CD4-positive, alpha-beta T cell (primary cell): ENCODE measurements at regions of chr11 and their contacts with region 1.

Region 1: GRCh38 chr11:129895126-129896041 is at the start of gene NFRKB:
- DNase-seq: peak; percentile 81 to 92 (median 88)
- ATAC-seq: peak; percentile 96
- H3K4me3 ChIP-seq: peak within 1 kb of the TSS; percentile 91
- H3K4me3 Mint-ChIP-seq: peak within 1 kb of the TSS; percentile 92
- H3K27ac ChIP-seq: peak within 1 kb of the TSS; percentile 43 to 74
- H3K27ac Mint-ChIP-seq: peak within 1 kb of the TSS; percentile 92
- H3K4me1 ChIP-seq: peaks cover 20% of the 10 kb centered on the region
- H3K4me1 Mint-ChIP-seq: peaks cover 54% of the 10 kb centered on the region
- H3K27me3 ChIP-seq: no peaks in the 10 kb centered on the region
- H3K27me3 Mint-ChIP-seq: no peaks in the 10 kb centered on the region
- CTCF ChIP-seq: no peak
- total RNA-seq, gene NFRKB: 61.7 to 64.5 TPM

Region 2: GRCh38 chr11:129785383-129786111 is 109.8 kb before region 1 on chr11:
- CTCF ChIA-PET with region 1: no interaction called
- POLR2A ChIA-PET with region 1: no interaction called
- intact Hi-C with region 1: loop called (anchors 5 to 10 kb)
- DNase-seq: peak in 3 of 14 experiments; percentile 7 to 43 (median 29)
- ATAC-seq: no peak
- H3K4me3 ChIP-seq: no peak overlapping the region
- H3K4me3 Mint-ChIP-seq: no peak overlapping the region
- H3K27ac ChIP-seq: no peak overlapping the region
- H3K27ac Mint-ChIP-seq: no peak overlapping the region
- H3K4me1 ChIP-seq: peaks cover 4% of the 10 kb centered on the region
- H3K4me1 Mint-ChIP-seq: peaks cover 8% of the 10 kb centered on the region
- H3K27me3 ChIP-seq: no peaks in the 10 kb centered on the region
- H3K27me3 Mint-ChIP-seq: no peaks in the 10 kb centered on the region
- CTCF ChIP-seq: peak; percentile 67

Region 3: GRCh38 chr11:129853518-129854236 is 41.7 kb before region 1 on chr11:
- CTCF ChIA-PET with region 1: no interaction called
- POLR2A ChIA-PET with region 1: interaction called, 27 read pairs
- intact Hi-C with region 1: loop called in 1 of 2 experiments (anchors 5 kb)
- DNase-seq: peak; percentile 72 to 92 (median 86)
- ATAC-seq: peak; percentile 93
- H3K4me3 ChIP-seq: peak overlapping the region; percentile 7
- H3K4me3 Mint-ChIP-seq: peak overlapping the region; percentile 73
- H3K27ac ChIP-seq: peak overlapping the region; percentile 65 to 66
- H3K27ac Mint-ChIP-seq: peak overlapping the region; percentile 97
- H3K4me1 ChIP-seq: peaks cover 29% of the 10 kb centered on the region
- H3K4me1 Mint-ChIP-seq: peaks cover 53% of the 10 kb centered on the region
- H3K27me3 ChIP-seq: no peaks in the 10 kb centered on the region
- H3K27me3 Mint-ChIP-seq: no peaks in the 10 kb centered on the region
- CTCF ChIP-seq: no peak

Region 4: GRCh38 chr11:130002846-130003716 is 107.7 kb after region 1 on chr11:
- CTCF ChIA-PET with region 1: no interaction called
- POLR2A ChIA-PET with region 1: interaction called, 12 read pairs
- intact Hi-C with region 1: loop called in 1 of 2 experiments (anchors 2 kb)
- DNase-seq: peak; percentile 81 to 97 (median 88)
- ATAC-seq: peak; percentile 78
- H3K4me3 ChIP-seq: peak overlapping the region; percentile 76
- H3K4me3 Mint-ChIP-seq: peak overlapping the region; percentile 100
- H3K27ac ChIP-seq: peak overlapping the region; percentile 98 to 100
- H3K27ac Mint-ChIP-seq: peak overlapping the region; percentile 100
- H3K4me1 ChIP-seq: peaks cover 23% of the 10 kb centered on the region
- H3K4me1 Mint-ChIP-seq: peaks cover 44% of the 10 kb centered on the region
- H3K27me3 ChIP-seq: no peaks in the 10 kb centered on the region
- H3K27me3 Mint-ChIP-seq: no peaks in the 10 kb centered on the region
- CTCF ChIP-seq: no peak

Region 5: DNA sequence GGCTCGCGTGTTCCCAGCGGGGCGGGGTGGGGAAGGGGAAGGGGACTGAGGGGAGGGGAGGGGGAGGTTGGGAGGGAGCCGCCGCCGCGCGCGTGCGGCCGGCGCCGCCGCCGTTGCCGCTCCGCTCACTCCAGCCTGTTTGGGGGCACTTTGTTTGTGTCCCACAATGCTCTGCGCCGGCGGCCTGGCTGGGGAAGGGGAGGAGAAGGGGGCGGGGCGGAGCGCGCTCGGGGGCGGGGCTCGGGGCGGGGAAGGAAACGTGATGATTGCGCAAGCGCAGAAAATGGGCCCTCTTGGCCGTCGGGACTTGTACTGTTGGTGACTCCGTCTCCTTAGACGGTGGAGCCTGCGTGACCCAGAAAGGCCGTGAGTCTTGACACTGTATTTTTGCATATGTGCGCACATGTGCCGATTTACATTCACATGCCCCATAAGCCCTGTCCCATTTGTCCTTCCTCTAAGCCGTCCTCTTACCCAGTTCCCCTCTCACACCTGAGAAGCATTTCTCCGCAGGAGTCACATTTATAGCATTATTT is 419.4 kb after region 1 on chr11 and contains the start of gene ZBTB44:
- CTCF ChIA-PET with region 1: no interaction called
- POLR2A ChIA-PET with region 1: no interaction called
- intact Hi-C with region 1: loop called in 1 of 2 experiments (anchors 5 kb)
- DNase-seq: peak; percentile 87 to 95 (median 92)
- ATAC-seq: peak; percentile 78
- H3K4me3 ChIP-seq: peak within 1 kb of the TSS; percentile 80
- H3K4me3 Mint-ChIP-seq: peak within 1 kb of the TSS; percentile 93
- H3K27ac ChIP-seq: peak within 1 kb of the TSS; percentile 69 to 87
- H3K27ac Mint-ChIP-seq: peak within 1 kb of the TSS; percentile 97
- H3K4me1 ChIP-seq: peaks cover 16% of the 10 kb centered on the region
- H3K4me1 Mint-ChIP-seq: peaks cover 48% of the 10 kb centered on the region
- H3K27me3 ChIP-seq: no peaks in the 10 kb centered on the region
- H3K27me3 Mint-ChIP-seq: no peaks in the 10 kb centered on the region
- CTCF ChIP-seq: no peak
- total RNA-seq, gene ZBTB44: 33.9 to 41.6 TPM